MCF 10A (cell line): ENCODE measurements at regions of chr7 and their contacts with region 1.

Region 1: GRCh38 chr7:131040467-131040932 is 287.2 kb upstream of the MKLN1 start:
- DNase-seq: peak; percentile 77
- H3K4me3 Mint-ChIP-seq: peak overlapping the region; percentile 53
- H3K27ac Mint-ChIP-seq: peak overlapping the region; percentile 78
- H3K4me1 Mint-ChIP-seq: peaks cover 31% of the 10 kb centered on the region
- H3K27me3 Mint-ChIP-seq: no peaks in the 10 kb centered on the region
- CTCF ChIP-seq: peak; percentile 87

Region 2: GRCh38 chr7:130141161-130141883 is 899.2 kb before region 1 on chr7:
- CTCF ChIA-PET with region 1: no interaction called
- POLR2A ChIA-PET with region 1: no interaction called
- intact Hi-C with region 1: no loop called
- DNase-seq: no peak
- H3K4me3 Mint-ChIP-seq: no peak overlapping the region
- H3K27ac Mint-ChIP-seq: no peak overlapping the region
- H3K4me1 Mint-ChIP-seq: peaks cover 7% of the 10 kb centered on the region
- H3K27me3 Mint-ChIP-seq: no peaks in the 10 kb centered on the region
- CTCF ChIP-seq: no peak

Region 3: DNA sequence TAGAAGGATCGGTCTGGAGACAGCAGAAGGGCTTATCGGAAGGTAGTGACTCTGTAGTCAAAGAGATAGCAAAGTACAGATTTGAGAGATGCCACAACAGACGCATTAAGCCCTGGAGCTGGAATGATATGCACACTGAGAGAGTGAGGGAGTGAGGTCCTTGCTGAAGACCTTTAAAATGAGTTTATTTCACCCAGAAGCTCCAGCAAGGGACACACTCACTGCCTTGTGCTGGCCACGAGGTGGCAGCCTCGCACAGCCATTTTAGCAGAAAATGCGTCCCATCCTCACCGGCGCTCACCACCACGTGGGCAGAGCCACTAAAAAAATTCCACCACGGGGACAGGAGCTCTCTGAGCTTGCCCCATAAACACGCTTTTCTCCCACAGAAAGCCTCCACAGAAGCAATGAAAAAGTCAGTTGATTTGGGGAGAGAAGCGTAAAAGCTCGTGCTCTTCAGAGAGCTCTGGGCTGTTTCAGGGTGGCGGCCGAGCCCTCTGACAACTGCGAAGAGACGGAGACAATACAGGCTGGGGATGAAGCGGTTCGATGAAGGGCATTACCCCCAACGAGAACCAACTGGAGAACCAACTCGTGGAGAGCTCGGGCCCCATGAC is 143.5 kb before region 1 on chr7:
- CTCF ChIA-PET with region 1: interaction called, 35 read pairs
- POLR2A ChIA-PET with region 1: interaction called, 22 read pairs
- intact Hi-C with region 1: loop called (anchors 1 kb)
- DNase-seq: peak; percentile 74
- H3K4me3 Mint-ChIP-seq: peak overlapping the region; percentile 35
- H3K27ac Mint-ChIP-seq: peak overlapping the region; percentile 76
- H3K4me1 Mint-ChIP-seq: peaks cover 83% of the 10 kb centered on the region
- H3K27me3 Mint-ChIP-seq: no peaks in the 10 kb centered on the region
- CTCF ChIP-seq: peak; percentile 63

Region 4: DNA sequence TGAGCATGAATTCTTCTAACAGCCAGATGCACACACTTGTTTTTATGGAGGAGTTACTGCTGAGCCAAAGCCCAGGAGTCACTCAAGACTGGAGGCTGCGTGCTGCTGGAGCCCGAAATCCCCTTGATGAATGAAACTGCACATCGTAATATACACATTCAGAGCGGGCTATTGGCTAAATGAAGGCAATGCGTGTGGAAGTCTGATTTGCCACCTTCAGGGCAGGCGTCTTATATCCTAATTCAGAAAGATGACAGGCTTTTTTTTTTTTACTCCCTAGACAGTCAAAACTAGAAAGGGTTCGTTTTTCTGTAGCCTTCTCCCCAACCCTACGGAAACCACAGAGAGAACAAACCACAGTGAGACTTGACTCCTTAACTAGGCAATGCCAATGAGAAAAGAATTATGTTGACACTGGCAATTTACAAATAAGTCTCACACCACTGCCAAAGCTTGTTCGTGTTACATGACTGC is 79.3 kb before region 1 on chr7:
- CTCF ChIA-PET with region 1: interaction called, 19 read pairs
- POLR2A ChIA-PET with region 1: interaction called, 8 read pairs
- intact Hi-C with region 1: loop called (anchors 5 kb)
- DNase-seq: peak; percentile 91
- H3K4me3 Mint-ChIP-seq: peak overlapping the region; percentile 76
- H3K27ac Mint-ChIP-seq: peak overlapping the region; percentile 94
- H3K4me1 Mint-ChIP-seq: peaks cover 48% of the 10 kb centered on the region
- H3K27me3 Mint-ChIP-seq: no peaks in the 10 kb centered on the region
- CTCF ChIP-seq: no peak

Region 5: GRCh38 chr7:130996841-130997231 is 43.7 kb before region 1 on chr7:
- CTCF ChIA-PET with region 1: interaction called, 7 read pairs
- POLR2A ChIA-PET with region 1: interaction called, 13 read pairs
- intact Hi-C with region 1: loop called (anchors 5 kb)
- DNase-seq: peak; percentile 73
- H3K4me3 Mint-ChIP-seq: peak overlapping the region; percentile 21
- H3K27ac Mint-ChIP-seq: peak overlapping the region; percentile 96
- H3K4me1 Mint-ChIP-seq: peaks cover 54% of the 10 kb centered on the region
- H3K27me3 Mint-ChIP-seq: no peaks in the 10 kb centered on the region
- CTCF ChIP-seq: no peak

Region 6: GRCh38 chr7:131027287-131027773 is 13.2 kb before region 1 on chr7:
- CTCF ChIA-PET with region 1: interaction called, 5 read pairs
- POLR2A ChIA-PET with region 1: interaction called, 32 read pairs
- intact Hi-C with region 1: no loop called
- DNase-seq: peak; percentile 89
- H3K4me3 Mint-ChIP-seq: peak overlapping the region; percentile 64
- H3K27ac Mint-ChIP-seq: peak overlapping the region; percentile 88
- H3K4me1 Mint-ChIP-seq: peaks cover 31% of the 10 kb centered on the region
- H3K27me3 Mint-ChIP-seq: no peaks in the 10 kb centered on the region
- CTCF ChIP-seq: no peak